Mammary epithelial cell (primary cell): ENCODE measurements at regions of chr11 and their contacts with region 1.

Region 1: DNA sequence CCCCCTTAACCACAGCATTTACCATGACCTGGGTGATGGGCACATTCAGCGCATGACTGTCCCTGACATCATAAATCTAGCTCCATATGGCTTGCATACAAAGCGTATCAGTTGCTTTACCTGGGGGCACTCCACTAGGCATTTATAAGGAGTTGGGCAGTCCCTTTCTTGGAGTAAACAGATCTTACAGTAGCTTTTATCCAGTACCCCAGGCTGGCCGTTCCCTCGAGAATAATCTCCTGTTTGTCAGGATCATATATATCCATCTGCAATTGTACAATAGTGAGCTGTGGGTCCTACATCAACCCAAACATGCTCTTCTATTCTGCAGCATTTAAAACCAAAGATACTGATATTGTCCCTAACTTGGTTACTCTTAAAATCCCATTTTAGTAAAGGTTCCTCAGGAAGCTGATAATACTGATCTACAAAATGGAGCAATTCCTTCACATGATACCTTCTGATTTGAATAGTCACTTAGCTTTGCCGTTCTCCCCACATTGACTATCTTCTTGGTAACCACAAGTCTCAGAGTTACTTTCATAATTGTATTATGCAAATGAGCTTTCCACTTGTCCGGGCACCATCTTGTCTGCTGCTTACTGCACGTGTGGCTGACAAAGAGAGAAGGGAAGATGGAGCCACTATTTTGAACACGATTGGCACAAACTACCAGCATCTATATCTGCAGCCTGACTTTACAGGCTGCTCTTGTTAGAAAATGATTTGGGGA is 205.0 kb downstream of the CWF19L2 start:
- DNase-seq: no peak
- H3K4me3 ChIP-seq: no peak overlapping the region
- H3K27ac ChIP-seq: no peak overlapping the region
- H3K4me1 ChIP-seq: no peaks in the 10 kb centered on the region
- H3K27me3 ChIP-seq: peaks cover 2% of the 10 kb centered on the region
- CTCF ChIP-seq: no peak

Region 2: DNA sequence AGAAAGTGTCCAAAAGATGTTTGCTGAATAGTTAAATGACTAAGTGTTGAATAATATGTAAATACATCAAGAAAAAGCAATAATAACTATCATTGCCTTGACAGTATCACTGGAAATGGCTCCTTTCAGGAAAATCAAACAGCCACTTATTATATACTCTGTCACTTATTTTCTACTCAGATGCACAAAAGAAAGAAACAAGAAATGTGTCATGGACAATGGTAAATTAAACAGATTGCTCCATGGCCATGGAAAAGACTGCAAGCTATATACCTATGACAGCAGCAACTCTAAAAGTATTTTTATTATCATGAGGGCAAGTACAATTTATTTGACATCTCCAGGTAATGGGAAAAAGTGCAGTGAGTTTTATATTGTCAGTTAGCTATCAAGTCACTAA is 181.5 kb before region 1 on chr11:
- CTCF ChIA-PET with region 1: no interaction called
- dilution Hi-C with region 1: no loop called
- in situ Hi-C with region 1: no loop called
- intact Hi-C with region 1: no loop called
- DNase-seq: no peak
- H3K4me3 ChIP-seq: no peak overlapping the region
- H3K27ac ChIP-seq: no peak overlapping the region
- H3K4me1 ChIP-seq: no peaks in the 10 kb centered on the region
- H3K27me3 ChIP-seq: peaks cover 2% of the 10 kb centered on the region
- CTCF ChIP-seq: no peak

Region 3: GRCh38 chr11:107196732-107197131 is 55.9 kb before region 1 on chr11:
- CTCF ChIA-PET with region 1: no interaction called
- dilution Hi-C with region 1: no loop called
- in situ Hi-C with region 1: no loop called
- intact Hi-C with region 1: no loop called
- DNase-seq: no peak
- H3K4me3 ChIP-seq: no peak overlapping the region
- H3K27ac ChIP-seq: no peak overlapping the region
- H3K4me1 ChIP-seq: no peaks in the 10 kb centered on the region
- H3K27me3 ChIP-seq: no peaks in the 10 kb centered on the region
- CTCF ChIP-seq: no peak

Region 4: DNA sequence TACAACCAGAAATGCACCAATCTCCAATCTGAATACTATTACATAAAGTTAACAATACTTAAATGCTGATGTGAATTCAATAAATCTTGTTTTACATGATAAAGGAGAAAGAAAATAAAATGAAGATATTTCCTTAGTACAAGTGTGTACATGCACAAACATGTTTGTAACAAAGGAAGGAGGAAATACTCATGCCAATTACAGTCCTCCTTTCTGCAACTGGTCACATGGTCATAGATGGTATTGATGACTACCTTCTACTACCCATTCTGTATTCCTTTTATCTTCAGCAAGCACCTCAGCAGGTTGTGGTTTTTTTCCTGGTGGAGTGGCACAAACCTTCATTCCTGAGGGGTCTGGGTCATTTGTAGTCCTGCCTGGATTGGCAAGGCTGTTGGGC is 20.1 kb before region 1 on chr11:
- CTCF ChIA-PET with region 1: no interaction called
- dilution Hi-C with region 1: no loop called
- in situ Hi-C with region 1: no loop called
- intact Hi-C with region 1: no loop called
- DNase-seq: peak; percentile 39
- H3K4me3 ChIP-seq: no peak overlapping the region
- H3K27ac ChIP-seq: no peak overlapping the region
- H3K4me1 ChIP-seq: no peaks in the 10 kb centered on the region
- H3K27me3 ChIP-seq: no peaks in the 10 kb centered on the region
- CTCF ChIP-seq: no peak

Region 5: GRCh38 chr11:107438148-107438547 is 185.6 kb after region 1 on chr11:
- CTCF ChIA-PET with region 1: no interaction called
- dilution Hi-C with region 1: no loop called
- in situ Hi-C with region 1: no loop called
- intact Hi-C with region 1: loop called (anchors 2 kb)
- DNase-seq: no peak
- H3K4me3 ChIP-seq: no peak overlapping the region
- H3K27ac ChIP-seq: no peak overlapping the region
- H3K4me1 ChIP-seq: no peaks in the 10 kb centered on the region
- H3K27me3 ChIP-seq: no peaks in the 10 kb centered on the region
- CTCF ChIP-seq: no peak

Region 6: GRCh38 chr11:107689317-107690202 is 437.0 kb after region 1 on chr11:
- CTCF ChIA-PET with region 1: no interaction called
- dilution Hi-C with region 1: no loop called
- in situ Hi-C with region 1: no loop called
- intact Hi-C with region 1: loop called (anchors 2 kb)
- DNase-seq: peak; percentile 34
- H3K4me3 ChIP-seq: no peak overlapping the region
- H3K27ac ChIP-seq: no peak overlapping the region
- H3K4me1 ChIP-seq: no peaks in the 10 kb centered on the region
- H3K27me3 ChIP-seq: no peaks in the 10 kb centered on the region
- CTCF ChIP-seq: peak; percentile 28 to 72